Tibial artery (tissue), 4 donors: ENCODE measurements at regions of chr9 and their contacts with region 1.

Region 1: DNA sequence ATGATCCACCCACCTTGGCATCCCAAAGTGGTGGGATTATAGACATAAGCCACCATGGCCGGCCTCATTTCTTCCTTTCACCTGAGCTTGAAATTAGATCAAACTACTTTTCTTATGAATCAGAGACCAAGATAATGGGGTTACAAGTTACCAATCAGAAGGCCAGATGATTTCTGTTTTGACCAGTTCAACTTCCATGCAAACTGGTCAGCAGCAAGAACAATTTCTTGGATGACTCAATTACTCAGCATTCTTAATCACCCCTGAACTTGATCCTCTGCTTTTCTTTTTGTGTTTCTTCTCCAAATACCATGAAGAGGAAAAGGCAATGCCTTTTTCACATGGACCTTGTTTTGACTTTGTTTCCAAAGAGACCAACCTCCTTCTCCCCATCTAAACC is 10.0 kb upstream of the PLIN2 start:
- DNase-seq: no peak
- H3K4me3 ChIP-seq: no peak overlapping the region
- H3K27ac ChIP-seq: no peak overlapping the region
- H3K4me1 ChIP-seq: no peaks in the 10 kb centered on the region
- H3K27me3 ChIP-seq: no peaks in the 10 kb centered on the region
- CTCF ChIP-seq: no peak

Region 2: GRCh38 chr9:18811171-18811570 is 326.1 kb before region 1 on chr9:
- intact Hi-C with region 1: no loop called
- DNase-seq: no peak
- H3K4me3 ChIP-seq: no peak overlapping the region
- H3K27ac ChIP-seq: no peak overlapping the region
- H3K4me1 ChIP-seq: no peaks in the 10 kb centered on the region
- H3K27me3 ChIP-seq: no peaks in the 10 kb centered on the region
- CTCF ChIP-seq: no peak

Region 3: DNA sequence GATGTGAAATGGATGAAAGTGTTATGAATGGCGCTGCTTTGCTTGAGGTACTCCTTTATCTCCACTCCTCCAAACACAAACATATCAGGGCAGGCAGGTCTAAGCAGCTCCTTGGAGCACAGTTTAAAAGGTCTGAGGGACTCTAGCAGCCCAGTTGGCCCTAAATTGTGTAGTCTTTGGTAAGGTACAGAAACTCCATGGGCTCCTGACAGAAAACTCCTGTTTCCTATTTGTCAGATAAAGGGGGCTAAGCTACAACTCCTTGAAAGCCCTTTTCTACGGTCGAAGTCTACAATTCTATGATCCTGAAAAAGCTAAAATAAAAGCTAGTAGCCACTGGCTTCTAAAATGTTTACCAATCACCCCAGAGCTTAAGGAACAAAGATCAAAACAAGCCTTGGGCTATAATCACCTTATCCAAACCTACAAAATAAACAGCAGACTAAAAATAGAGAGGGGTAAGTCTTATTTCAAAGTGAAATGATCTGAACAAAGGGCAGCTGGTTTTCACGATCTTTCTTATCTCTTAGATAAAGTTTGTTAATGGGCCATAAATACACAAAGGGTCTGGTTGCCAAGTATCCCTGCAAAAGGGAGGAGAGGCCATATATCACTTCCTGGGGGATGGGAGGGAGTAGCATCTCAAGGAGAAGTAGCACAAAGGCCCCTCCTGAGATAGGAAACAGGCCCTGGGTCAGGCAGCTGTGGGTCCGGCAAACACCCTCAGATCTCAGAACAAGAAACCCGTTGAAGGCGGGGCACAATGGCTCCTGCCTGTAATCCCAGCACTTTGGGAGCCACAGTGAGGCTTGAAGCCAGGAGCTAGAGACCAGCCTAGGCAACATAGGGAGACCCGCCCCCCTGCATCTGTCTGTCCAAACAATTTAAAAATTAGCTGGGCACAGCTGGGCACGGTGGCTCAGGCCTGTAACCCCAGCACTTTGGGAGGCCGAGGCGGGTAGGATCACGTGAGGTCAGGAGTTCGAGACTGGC is 64.9 kb after region 1 on chr9:
- intact Hi-C with region 1: no loop called
- DNase-seq: no peak
- H3K4me3 ChIP-seq: no peak overlapping the region
- H3K27ac ChIP-seq: no peak overlapping the region
- H3K4me1 ChIP-seq: no peaks in the 10 kb centered on the region
- H3K27me3 ChIP-seq: no peaks in the 10 kb centered on the region
- CTCF ChIP-seq: no peak

Region 4: GRCh38 chr9:20604562-20604961 is 1467.3 kb after region 1 on chr9:
- intact Hi-C with region 1: loop called (anchors 10 kb)
- DNase-seq: no peak
- H3K4me3 ChIP-seq: peak overlapping the region in 1 of 2 donors; percentile 5
- H3K27ac ChIP-seq: no peak overlapping the region
- H3K4me1 ChIP-seq: peaks cover 0 to 32% (median 8%) of the 10 kb centered on the region in 4 donors
- H3K27me3 ChIP-seq: no peaks in the 10 kb centered on the region
- CTCF ChIP-seq: no peak